Activated B cell treated with CpG ODN at 0.5 μM for 24 hours (primary cell): ENCODE measurements at regions of chr5 and their contacts with region 1.

Region 1: GRCh38 chr5:157431544-157432200 is 28.3 kb upstream of the NIPAL4 start:
- DNase-seq: no peak
- ATAC-seq: peak; percentile 100
- H3K4me3 Mint-ChIP-seq: peak overlapping the region; percentile 0
- H3K27ac Mint-ChIP-seq: peak overlapping the region; percentile 81
- H3K4me1 Mint-ChIP-seq: peaks cover 18% of the 10 kb centered on the region
- H3K27me3 Mint-ChIP-seq: no peaks in the 10 kb centered on the region
- CTCF ChIP-seq: no peak

Region 2: GRCh38 chr5:157471709-157472108 is 40.0 kb after region 1 on chr5:
- CTCF ChIA-PET with region 1: interaction called, 37 read pairs
- POLR2A ChIA-PET with region 1: interaction called, 3 read pairs
- intact Hi-C with region 1: loop called (anchors 1 kb)
- DNase-seq: no peak
- ATAC-seq: peak; percentile 61
- H3K4me3 Mint-ChIP-seq: no peak overlapping the region
- H3K27ac Mint-ChIP-seq: peak overlapping the region; percentile 2
- H3K4me1 Mint-ChIP-seq: peaks cover 46% of the 10 kb centered on the region
- H3K27me3 Mint-ChIP-seq: no peaks in the 10 kb centered on the region
- CTCF ChIP-seq: no peak

Region 3: DNA sequence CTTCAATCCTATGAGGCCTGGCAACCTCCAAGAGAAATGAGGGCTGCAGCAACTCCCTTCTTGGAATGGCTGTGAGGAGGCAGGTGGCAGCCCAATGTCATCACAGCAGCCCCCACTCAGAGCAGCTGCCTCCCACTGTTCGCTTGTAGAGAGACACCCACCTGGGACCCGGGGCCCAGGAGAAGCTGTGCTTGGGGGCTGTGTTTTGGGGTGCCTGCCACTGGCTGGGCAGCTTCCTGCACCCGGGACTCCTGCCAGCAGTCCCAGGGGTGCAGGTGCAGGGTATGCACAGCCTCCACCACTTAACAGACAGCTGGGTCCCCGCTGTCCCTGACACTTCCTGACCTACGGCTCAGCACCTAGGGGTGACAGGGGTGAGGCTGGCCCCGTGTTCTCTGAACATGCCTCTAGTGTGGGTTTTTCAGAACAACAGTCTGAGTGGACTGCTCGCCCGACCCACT is 54.6 kb after region 1 on chr5:
- CTCF ChIA-PET with region 1: interaction called, 4 read pairs
- POLR2A ChIA-PET with region 1: interaction called, 14 read pairs
- intact Hi-C with region 1: no loop called
- DNase-seq: no peak
- ATAC-seq: peak; percentile 33
- H3K4me3 Mint-ChIP-seq: peak overlapping the region; percentile 56
- H3K27ac Mint-ChIP-seq: peak overlapping the region; percentile 95
- H3K4me1 Mint-ChIP-seq: peaks cover 86% of the 10 kb centered on the region
- H3K27me3 Mint-ChIP-seq: no peaks in the 10 kb centered on the region
- CTCF ChIP-seq: no peak

Region 4: DNA sequence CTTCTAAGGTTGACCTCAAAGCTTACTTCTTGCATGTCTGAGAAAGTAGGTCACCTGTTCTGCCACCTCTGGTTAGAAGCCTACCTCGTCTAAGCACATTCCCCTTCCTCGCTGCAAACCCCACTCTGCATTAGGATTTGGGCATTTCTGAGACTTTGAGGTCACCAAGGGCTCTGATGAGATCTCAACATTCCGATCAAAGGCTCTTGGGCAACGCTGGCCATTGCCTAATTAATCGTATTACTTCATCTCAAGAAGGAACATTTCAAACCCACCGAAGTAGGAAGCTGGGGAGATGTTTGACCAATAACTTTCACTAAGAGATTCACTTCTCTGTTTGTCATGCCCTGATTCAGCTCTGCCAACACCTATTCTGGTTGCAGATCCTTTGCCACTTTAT is 135.4 kb after region 1 on chr5:
- CTCF ChIA-PET with region 1: interaction called, 11 read pairs
- POLR2A ChIA-PET with region 1: interaction called, 4 read pairs
- intact Hi-C with region 1: no loop called
- DNase-seq: no peak
- ATAC-seq: no peak
- H3K4me3 Mint-ChIP-seq: peak overlapping the region; percentile 58
- H3K27ac Mint-ChIP-seq: peak overlapping the region; percentile 85
- H3K4me1 Mint-ChIP-seq: peaks cover 92% of the 10 kb centered on the region
- H3K27me3 Mint-ChIP-seq: no peaks in the 10 kb centered on the region
- CTCF ChIP-seq: no peak

Region 5: GRCh38 chr5:157603333-157604190 is 171.9 kb after region 1 on chr5:
- CTCF ChIA-PET with region 1: no interaction called
- POLR2A ChIA-PET with region 1: no interaction called
- intact Hi-C with region 1: no loop called
- DNase-seq: no peak
- ATAC-seq: peak; percentile 48
- H3K4me3 Mint-ChIP-seq: peak overlapping the region; percentile 25
- H3K27ac Mint-ChIP-seq: peak overlapping the region; percentile 83
- H3K4me1 Mint-ChIP-seq: peaks cover 85% of the 10 kb centered on the region
- H3K27me3 Mint-ChIP-seq: no peaks in the 10 kb centered on the region
- CTCF ChIP-seq: no peak